ENCODE measurements at regions of chr1 and their contacts with region 1.

Region 1: GRCh38 chr1:145996433-145997015 is at the start of gene TXNIP:
- DNase-seq: peak; percentile 99
- H3K4me3 Mint-ChIP-seq: peak within 1 kb of the TSS; percentile 89
- H3K27ac Mint-ChIP-seq: peak within 1 kb of the TSS; percentile 95
- H3K4me1 Mint-ChIP-seq: peaks cover 51% of the 10 kb centered on the region
- H3K27me3 Mint-ChIP-seq: no peaks in the 10 kb centered on the region
- CTCF ChIP-seq: no peak
- total RNA-seq, gene TXNIP: 576 and 599 TPM in 2 replicates

Region 2: GRCh38 chr1:145823565-145824498 is 172.7 kb before region 1 on chr1 and contains the starts of genes POLR3C and RNF115:
- CTCF ChIA-PET with region 1: no interaction called
- POLR2A ChIA-PET with region 1: interaction called, 11 read pairs
- intact Hi-C with region 1: no loop called
- DNase-seq: peak; percentile 95
- H3K4me3 Mint-ChIP-seq: peak within 1 kb of the TSS; percentile 90
- H3K27ac Mint-ChIP-seq: peak within 1 kb of the TSS; percentile 94
- H3K4me1 Mint-ChIP-seq: peaks cover 6% of the 10 kb centered on the region
- H3K27me3 Mint-ChIP-seq: no peaks in the 10 kb centered on the region
- CTCF ChIP-seq: no peak
- total RNA-seq, gene POLR3C: 67.9 and 96.8 TPM in 2 replicates
- total RNA-seq, gene RNF115: 16.8 and 19.5 TPM in 2 replicates

Region 3: DNA sequence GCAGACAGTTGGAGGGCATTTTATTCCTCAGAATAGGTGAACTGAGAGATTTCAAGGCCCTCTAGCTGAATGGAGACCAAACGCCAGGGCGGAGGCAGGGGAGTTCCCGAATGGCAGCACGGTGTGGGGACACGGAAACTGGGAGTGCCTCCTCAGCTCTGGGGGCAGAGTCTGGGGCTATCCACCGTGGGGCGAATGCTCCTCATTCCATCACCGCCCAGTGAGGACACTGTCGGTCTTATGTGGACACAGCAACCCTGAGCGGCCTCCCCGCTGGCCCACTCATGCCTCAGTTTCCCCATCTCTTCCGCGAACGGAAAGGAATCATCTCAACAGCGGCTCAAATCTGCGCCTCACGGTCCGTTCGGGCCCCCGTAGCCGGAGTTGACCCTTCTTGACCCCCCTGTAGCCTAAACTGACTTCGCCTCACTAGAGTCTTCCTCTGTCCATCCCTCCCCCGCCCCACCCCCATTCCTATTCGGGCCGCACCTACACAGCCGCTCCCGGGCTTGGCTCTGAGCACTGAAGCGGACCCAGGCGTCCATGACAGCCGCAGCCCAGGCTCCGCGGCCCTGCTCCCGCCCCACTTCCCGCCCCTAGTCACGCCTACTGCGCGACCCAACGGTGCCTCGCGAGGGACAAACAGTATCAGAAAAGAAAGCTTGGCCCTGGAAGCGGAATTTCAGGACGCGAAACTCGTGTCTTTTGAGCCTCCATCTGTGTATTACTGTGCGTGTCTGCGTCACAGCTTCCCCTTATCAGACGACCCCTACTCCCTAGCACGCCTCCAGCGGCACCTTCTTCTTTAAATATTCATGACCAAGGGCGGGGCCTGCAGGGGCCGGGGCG is 78.2 kb before region 1 on chr1 and contains the start of gene PEX11B:
- CTCF ChIA-PET with region 1: interaction called, 3 read pairs
- POLR2A ChIA-PET with region 1: interaction called, 14 read pairs
- intact Hi-C with region 1: no loop called
- DNase-seq: peak; percentile 92
- H3K4me3 Mint-ChIP-seq: peak within 1 kb of the TSS; percentile 94
- H3K27ac Mint-ChIP-seq: peak within 1 kb of the TSS; percentile 99
- H3K4me1 Mint-ChIP-seq: peaks cover 43% of the 10 kb centered on the region
- H3K27me3 Mint-ChIP-seq: no peaks in the 10 kb centered on the region
- CTCF ChIP-seq: no peak
- total RNA-seq, gene PEX11B: 35.5 and 36.2 TPM in 2 replicates

Region 4: GRCh38 chr1:145927063-145927886 is 69.2 kb before region 1 on chr1 and contains the start of gene RBM8A:
- CTCF ChIA-PET with region 1: no interaction called
- POLR2A ChIA-PET with region 1: interaction called, 28 read pairs
- intact Hi-C with region 1: no loop called
- DNase-seq: peak; percentile 100
- H3K4me3 Mint-ChIP-seq: no peak within 1 kb of the TSS
- H3K27ac Mint-ChIP-seq: no peak within 1 kb of the TSS
- H3K4me1 Mint-ChIP-seq: peaks cover 14% of the 10 kb centered on the region
- H3K27me3 Mint-ChIP-seq: no peaks in the 10 kb centered on the region
- CTCF ChIP-seq: peak; percentile 76
- total RNA-seq, gene RBM8A: 370 and 403 TPM in 2 replicates

Region 5: GRCh38 chr1:145978854-145979759 is 17.4 kb before region 1 on chr1:
- CTCF ChIA-PET with region 1: interaction called, 773 read pairs
- POLR2A ChIA-PET with region 1: interaction called, 1,309 read pairs
- intact Hi-C with region 1: loop called (anchors 1 kb)
- DNase-seq: peak; percentile 100
- H3K4me3 Mint-ChIP-seq: no peak overlapping the region
- H3K27ac Mint-ChIP-seq: no peak overlapping the region
- H3K4me1 Mint-ChIP-seq: peaks cover 11% of the 10 kb centered on the region
- H3K27me3 Mint-ChIP-seq: no peaks in the 10 kb centered on the region
- CTCF ChIP-seq: peak; percentile 18

Region 6: GRCh38 chr1:145985502-145986439 is 10.8 kb before region 1 on chr1:
- CTCF ChIA-PET with region 1: interaction called, 773 read pairs
- POLR2A ChIA-PET with region 1: interaction called, 1,309 read pairs
- intact Hi-C with region 1: loop called (anchors 1 kb)
- DNase-seq: peak; percentile 88
- H3K4me3 Mint-ChIP-seq: peak overlapping the region; percentile 32
- H3K27ac Mint-ChIP-seq: peak overlapping the region; percentile 73
- H3K4me1 Mint-ChIP-seq: peaks cover 31% of the 10 kb centered on the region
- H3K27me3 Mint-ChIP-seq: no peaks in the 10 kb centered on the region
- CTCF ChIP-seq: no peak

Region 7: GRCh38 chr1:146007506-146008133 is 11.1 kb after region 1 on chr1:
- CTCF ChIA-PET with region 1: interaction called, 773 read pairs
- POLR2A ChIA-PET with region 1: interaction called, 1,309 read pairs
- intact Hi-C with region 1: loop called (anchors 1 kb)
- DNase-seq: no peak
- H3K4me3 Mint-ChIP-seq: peak overlapping the region; percentile 64
- H3K27ac Mint-ChIP-seq: peak overlapping the region; percentile 97
- H3K4me1 Mint-ChIP-seq: peaks cover 33% of the 10 kb centered on the region
- H3K27me3 Mint-ChIP-seq: no peaks in the 10 kb centered on the region
- CTCF ChIP-seq: no peak